WTC11 (cell line): ENCODE measurements at regions of chr11 and their contacts with region 1.

Region 1: DNA sequence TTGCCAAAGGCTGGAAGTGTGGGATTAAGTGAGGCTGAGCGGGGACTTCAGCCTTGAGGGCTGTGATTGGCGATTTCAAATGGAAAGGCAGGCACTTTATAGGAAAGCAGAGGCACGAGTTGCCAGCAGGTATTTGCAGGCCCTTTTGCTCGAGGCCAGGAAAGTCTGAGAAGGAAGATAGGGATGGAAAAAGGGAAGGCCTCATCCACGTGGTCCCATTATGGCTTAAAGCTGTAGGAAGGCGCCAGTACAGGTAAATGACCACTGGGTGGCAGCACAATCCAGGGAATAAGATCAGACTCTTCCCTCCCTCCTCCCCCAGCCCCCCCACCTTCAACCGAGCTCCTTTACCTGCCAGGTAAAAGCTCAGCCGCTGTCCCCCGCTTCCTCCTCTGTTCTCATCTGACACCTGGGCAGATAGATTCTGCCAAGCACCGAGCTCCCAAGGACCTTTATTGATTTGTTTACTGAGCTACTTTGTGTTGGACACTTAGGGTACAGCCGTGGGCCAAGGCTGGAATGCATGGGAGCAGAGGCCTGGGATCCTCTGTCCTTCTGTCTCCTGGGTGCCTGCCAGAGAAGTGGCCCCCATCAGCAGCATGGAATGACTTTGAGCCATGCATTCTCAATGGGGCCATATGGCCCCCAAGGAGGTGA is 7.5 kb downstream of the P2RX3 start:
- DNase-seq: peak; percentile 89
- ATAC-seq: peak; percentile 70
- H3K4me3 Mint-ChIP-seq: peak overlapping the region; percentile 24; the same call in 1 of the 2 replicates
- H3K27ac Mint-ChIP-seq: no peak overlapping the region
- H3K4me1 Mint-ChIP-seq: peaks cover 29% of the 10 kb centered on the region
- H3K27me3 Mint-ChIP-seq: peaks cover 16% of the 10 kb centered on the region
- CTCF ChIP-seq: peak; percentile 89

Region 2: DNA sequence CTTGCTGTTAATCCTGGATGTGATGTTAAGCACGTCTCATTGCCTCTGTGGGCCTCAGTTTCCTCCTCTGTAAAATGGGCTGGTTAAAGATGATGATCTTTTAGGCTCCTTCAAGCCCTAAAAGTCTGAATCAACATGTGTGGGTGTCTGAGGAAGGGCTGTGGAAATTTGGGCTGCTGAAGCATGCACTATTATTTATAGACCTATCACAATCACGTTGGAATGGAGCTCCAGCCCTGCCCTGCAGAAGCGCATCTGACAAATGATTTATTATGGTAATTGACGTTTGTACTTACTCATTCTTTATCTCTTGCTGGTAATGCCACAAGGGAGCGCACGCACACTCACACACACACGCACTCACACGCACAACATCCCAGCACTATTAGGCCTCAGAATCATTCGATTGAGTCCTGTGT is 12.9 kb after region 1 on chr11:
- CTCF ChIA-PET with region 1: interaction called, 21 read pairs
- POLR2A ChIA-PET with region 1: no interaction called
- DNase-seq: no peak
- ATAC-seq: no peak
- H3K4me3 Mint-ChIP-seq: no peak overlapping the region
- H3K27ac Mint-ChIP-seq: no peak overlapping the region
- H3K4me1 Mint-ChIP-seq: peaks cover 7% of the 10 kb centered on the region
- H3K27me3 Mint-ChIP-seq: peaks cover 11% of the 10 kb centered on the region; the same call in 1 of the 2 replicates
- CTCF ChIP-seq: no peak

Region 3: GRCh38 chr11:57426929-57427726 is 81.4 kb after region 1 on chr11 and contains the start of gene SLC43A3:
- CTCF ChIA-PET with region 1: interaction called, 26 read pairs
- POLR2A ChIA-PET with region 1: interaction called, 3 read pairs
- DNase-seq: peak; percentile 73
- ATAC-seq: peak; percentile 92
- H3K4me3 Mint-ChIP-seq: peak within 1 kb of the TSS; percentile 72
- H3K27ac Mint-ChIP-seq: peak within 1 kb of the TSS; percentile 64; the same call in 1 of the 2 replicates
- H3K4me1 Mint-ChIP-seq: peaks cover 29% of the 10 kb centered on the region
- H3K27me3 Mint-ChIP-seq: peaks cover 38% of the 10 kb centered on the region
- CTCF ChIP-seq: no peak
- total RNA-seq, gene SLC43A3: 22.6 to 25.8 TPM (median 25.3 TPM) in 3 replicates

Region 4: GRCh38 chr11:57493507-57494503 is 148.1 kb after region 1 on chr11:
- CTCF ChIA-PET with region 1: interaction called, 20 read pairs
- POLR2A ChIA-PET with region 1: no interaction called
- DNase-seq: peak; percentile 95
- ATAC-seq: peak; percentile 83
- H3K4me3 Mint-ChIP-seq: no peak overlapping the region
- H3K27ac Mint-ChIP-seq: peak overlapping the region; percentile 96
- H3K4me1 Mint-ChIP-seq: peaks cover 15% of the 10 kb centered on the region
- H3K27me3 Mint-ChIP-seq: no peaks in the 10 kb centered on the region; the same call in 1 of the 2 replicates
- CTCF ChIP-seq: peak; percentile 93

Region 5: DNA sequence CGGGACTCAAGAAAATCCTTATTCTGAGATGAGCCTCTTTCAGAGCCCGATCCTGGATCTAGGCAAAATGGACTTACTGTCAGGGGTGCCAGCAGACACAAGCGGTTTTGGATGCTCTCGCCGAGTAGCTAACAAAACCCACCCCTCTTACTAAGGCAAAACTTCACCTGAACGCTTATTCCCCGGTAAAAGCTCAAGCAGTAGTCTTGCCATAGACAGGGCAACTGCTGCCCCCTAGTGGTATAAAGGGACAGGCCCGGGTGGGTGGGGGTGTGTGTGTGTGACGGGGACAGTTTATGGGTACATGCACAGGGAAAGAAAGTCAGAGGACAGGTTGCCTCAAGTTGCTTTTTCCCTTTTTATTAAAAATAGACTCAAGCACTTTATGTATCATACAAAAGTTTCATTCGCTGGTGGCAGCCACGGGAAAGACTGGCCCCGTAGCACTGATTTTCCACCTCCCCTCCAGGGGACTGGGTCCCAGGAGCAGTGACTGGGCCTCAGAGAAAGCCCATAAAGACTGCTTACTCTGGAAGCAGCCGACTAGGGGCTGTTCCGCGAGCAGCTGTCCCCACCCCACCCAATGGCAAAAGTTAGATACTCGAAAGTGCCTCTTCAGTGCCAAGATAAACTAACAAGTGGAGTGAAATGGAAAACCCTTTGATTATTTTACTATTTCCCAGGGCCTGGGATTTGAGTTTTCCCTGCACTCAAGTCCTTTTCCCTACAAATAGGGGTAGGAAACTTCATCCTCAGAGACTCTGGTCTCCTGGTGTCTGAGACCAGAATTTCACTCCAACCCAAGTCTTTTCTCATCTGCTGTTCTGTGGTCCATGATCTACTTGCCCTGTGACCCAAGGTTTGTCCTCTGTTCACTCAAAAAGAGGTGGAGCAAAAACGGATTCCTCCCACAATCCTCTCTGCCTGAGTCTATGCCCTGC is 299.3 kb after region 1 on chr11:
- CTCF ChIA-PET with region 1: interaction called, 22 read pairs
- POLR2A ChIA-PET with region 1: no interaction called
- DNase-seq: peak; percentile 96
- ATAC-seq: peak; percentile 32
- H3K4me3 Mint-ChIP-seq: peak overlapping the region; percentile 80
- H3K27ac Mint-ChIP-seq: peak overlapping the region; percentile 92
- H3K4me1 Mint-ChIP-seq: peaks cover 94% of the 10 kb centered on the region
- H3K27me3 Mint-ChIP-seq: peaks cover 14% of the 10 kb centered on the region
- CTCF ChIP-seq: peak; percentile 92